Calu3 (cell line): ENCODE measurements at regions of chr7 and their contacts with region 1.

Region 1: DNA sequence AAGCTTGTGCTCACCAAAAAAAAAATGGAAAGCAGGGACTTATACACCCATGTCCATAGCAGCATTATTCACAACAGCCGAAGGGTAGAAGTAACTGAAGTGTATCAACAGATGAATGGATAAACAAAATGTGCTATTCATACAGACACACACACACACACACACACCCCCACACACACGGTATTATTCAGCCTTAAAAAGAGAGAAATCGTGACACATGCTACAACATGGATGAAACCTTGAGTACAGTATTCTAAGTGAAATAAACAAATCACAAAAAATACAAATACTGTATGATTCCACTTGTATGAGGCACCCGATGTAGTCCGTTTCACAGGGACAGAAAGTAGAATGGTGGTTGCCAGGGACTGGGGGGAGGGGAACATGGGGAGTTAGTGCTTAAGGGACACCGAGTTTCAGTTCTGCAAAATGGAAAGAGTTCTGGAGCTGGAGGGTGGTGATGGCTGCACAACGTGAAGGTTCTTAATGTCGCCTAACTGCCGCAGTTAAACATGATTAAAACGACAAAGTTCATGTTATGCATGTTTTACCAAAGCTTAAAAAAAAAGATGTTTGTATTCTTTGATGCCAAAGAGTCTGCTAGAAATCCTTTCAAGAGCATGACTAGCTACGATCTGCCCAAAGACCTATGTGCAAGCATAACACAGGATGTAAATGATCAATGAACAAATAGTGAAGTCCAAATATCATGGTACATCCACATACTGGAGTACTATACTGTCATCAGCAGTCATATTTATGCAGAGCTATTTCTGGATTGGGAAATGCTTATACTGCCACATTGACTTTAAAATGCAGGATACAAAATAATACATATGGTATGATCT is 7.2 kb downstream of the TNS3 start:
- DNase-seq: no peak
- H3K4me3 Mint-ChIP-seq: peak overlapping the region; percentile 32
- H3K27ac Mint-ChIP-seq: peak overlapping the region; percentile 61
- H3K4me1 Mint-ChIP-seq: peaks cover 87% of the 10 kb centered on the region
- H3K27me3 Mint-ChIP-seq: no peaks in the 10 kb centered on the region
- CTCF ChIP-seq: no peak

Region 2: GRCh38 chr7:47444379-47445057 is 130.2 kb before region 1 on chr7:
- CTCF ChIA-PET with region 1: no interaction called
- intact Hi-C with region 1: loop called (anchors 5 kb)
- DNase-seq: peak; percentile 30
- H3K4me3 Mint-ChIP-seq: no peak overlapping the region
- H3K27ac Mint-ChIP-seq: no peak overlapping the region
- H3K4me1 Mint-ChIP-seq: peaks cover 45% of the 10 kb centered on the region
- H3K27me3 Mint-ChIP-seq: no peaks in the 10 kb centered on the region
- CTCF ChIP-seq: peak; percentile 42

Region 3: DNA sequence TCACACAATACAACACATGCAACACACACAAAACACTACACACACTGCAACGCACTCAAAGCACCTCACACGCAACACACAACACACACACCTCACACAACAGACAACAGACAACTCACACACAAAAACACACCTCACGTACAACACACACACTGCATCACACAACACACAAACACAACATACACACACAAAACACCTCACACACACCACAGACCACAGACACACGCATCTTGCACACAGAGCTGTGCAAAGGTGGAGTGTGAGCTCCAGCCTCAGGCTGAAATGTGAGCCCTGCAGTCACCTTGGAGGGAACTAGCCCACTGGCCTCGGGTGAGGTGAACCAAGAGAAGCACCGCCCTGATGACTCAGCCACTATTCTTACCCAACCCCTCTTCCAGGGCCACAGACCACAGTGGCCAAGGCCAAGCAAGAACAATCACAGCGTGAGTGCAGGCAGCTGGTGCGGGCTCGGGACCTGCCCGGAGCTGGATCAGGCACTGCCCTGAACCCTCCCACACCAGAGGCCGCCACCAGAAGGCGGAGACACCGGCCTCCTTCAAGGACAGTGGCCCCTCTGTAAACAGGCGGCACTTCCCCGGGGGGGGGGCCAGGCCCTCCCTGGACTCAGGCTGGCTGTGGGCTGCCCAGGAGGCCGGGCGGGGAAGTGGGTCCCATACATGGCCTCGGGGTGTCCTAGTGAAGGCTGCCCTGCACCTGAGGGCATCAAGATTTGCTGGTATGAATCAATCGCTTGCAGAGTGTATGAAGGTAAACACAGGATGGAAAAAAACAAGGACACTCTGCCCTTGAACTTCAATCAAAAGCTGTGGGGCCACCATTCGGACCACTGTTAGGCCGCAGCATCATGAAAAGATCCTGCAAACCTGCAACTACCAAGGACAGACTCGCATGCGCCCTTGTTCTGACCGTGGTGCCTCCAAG is 99.5 kb before region 1 on chr7:
- CTCF ChIA-PET with region 1: interaction called, 4 read pairs
- intact Hi-C with region 1: loop called (anchors 2 kb)
- DNase-seq: peak; percentile 97
- H3K4me3 Mint-ChIP-seq: no peak overlapping the region
- H3K27ac Mint-ChIP-seq: no peak overlapping the region
- H3K4me1 Mint-ChIP-seq: peaks cover 39% of the 10 kb centered on the region
- H3K27me3 Mint-ChIP-seq: no peaks in the 10 kb centered on the region
- CTCF ChIP-seq: no peak

Region 4: GRCh38 chr7:47534322-47535034 is 40.2 kb before region 1 on chr7:
- CTCF ChIA-PET with region 1: interaction called, 5 read pairs
- intact Hi-C with region 1: loop called (anchors 1 kb)
- DNase-seq: peak; percentile 84
- H3K4me3 Mint-ChIP-seq: no peak overlapping the region
- H3K27ac Mint-ChIP-seq: peak overlapping the region; percentile 42
- H3K4me1 Mint-ChIP-seq: peaks cover 53% of the 10 kb centered on the region
- H3K27me3 Mint-ChIP-seq: no peaks in the 10 kb centered on the region
- CTCF ChIP-seq: peak; percentile 39

Region 5: GRCh38 chr7:47734287-47734948 is 159.7 kb after region 1 on chr7:
- CTCF ChIA-PET with region 1: no interaction called
- intact Hi-C with region 1: no loop called
- DNase-seq: no peak
- H3K4me3 Mint-ChIP-seq: peak overlapping the region; percentile 5
- H3K27ac Mint-ChIP-seq: peak overlapping the region; percentile 17
- H3K4me1 Mint-ChIP-seq: peaks cover 29% of the 10 kb centered on the region
- H3K27me3 Mint-ChIP-seq: no peaks in the 10 kb centered on the region
- CTCF ChIP-seq: no peak

Region 6: GRCh38 chr7:47763063-47763974 is 188.6 kb after region 1 on chr7:
- CTCF ChIA-PET with region 1: no interaction called
- intact Hi-C with region 1: loop called (anchors 1 kb)
- DNase-seq: peak; percentile 78
- H3K4me3 Mint-ChIP-seq: peak overlapping the region; percentile 15
- H3K27ac Mint-ChIP-seq: peak overlapping the region; percentile 86
- H3K4me1 Mint-ChIP-seq: peaks cover 54% of the 10 kb centered on the region
- H3K27me3 Mint-ChIP-seq: no peaks in the 10 kb centered on the region
- CTCF ChIP-seq: no peak